ENCODE measurements at regions of chr6 and their contacts with region 1.

Region 1: GRCh38 chr6:119110601-119111548 is 32.4 kb upstream of the FAM184A start:
- DNase-seq: peak; percentile 51
- ATAC-seq: peak; percentile 86
- H3K4me3 Mint-ChIP-seq: no peak overlapping the region
- H3K27ac Mint-ChIP-seq: no peak overlapping the region
- H3K4me1 Mint-ChIP-seq: peaks cover 21% of the 10 kb centered on the region
- H3K27me3 Mint-ChIP-seq: no peaks in the 10 kb centered on the region

Region 2: DNA sequence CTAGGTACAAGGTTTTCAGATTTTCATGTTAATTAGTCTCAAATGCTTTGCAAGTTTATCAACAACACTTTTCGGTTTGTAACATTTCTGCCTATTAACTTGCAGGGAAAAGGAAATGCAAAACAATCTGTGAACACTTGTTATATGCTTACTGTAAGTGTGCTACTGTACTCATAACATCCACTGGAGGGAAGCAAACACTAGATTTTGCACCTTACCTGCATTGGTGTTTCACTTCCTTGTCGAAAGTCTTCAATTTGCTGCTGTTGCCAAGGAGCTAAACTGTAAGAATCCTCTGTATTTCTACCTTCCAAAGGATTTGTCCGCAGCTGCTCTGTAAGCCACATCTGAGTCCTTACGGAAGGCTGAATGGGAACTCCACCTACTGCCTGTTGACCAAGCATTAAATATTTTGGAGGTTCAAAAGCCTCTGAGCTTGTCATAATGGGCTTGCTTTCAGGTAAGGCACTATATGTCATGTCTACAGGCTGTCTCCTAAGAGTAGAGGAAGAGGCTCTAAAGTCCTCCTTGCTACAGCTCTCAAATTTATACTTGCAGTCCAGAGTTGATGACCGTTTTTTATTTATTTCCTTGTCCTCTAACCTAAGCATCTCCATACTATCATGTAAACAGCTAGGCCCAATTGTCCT is 545.4 kb before region 1 on chr6:
- CTCF ChIA-PET with region 1: interaction called, 3 read pairs
- POLR2A ChIA-PET with region 1: no interaction called
- intact Hi-C with region 1: loop called (anchors 10 kb)
- DNase-seq: no peak
- ATAC-seq: peak; percentile 92
- H3K4me3 Mint-ChIP-seq: no peak overlapping the region
- H3K27ac Mint-ChIP-seq: no peak overlapping the region
- H3K4me1 Mint-ChIP-seq: peaks cover 20% of the 10 kb centered on the region
- H3K27me3 Mint-ChIP-seq: no peaks in the 10 kb centered on the region

Region 3: DNA sequence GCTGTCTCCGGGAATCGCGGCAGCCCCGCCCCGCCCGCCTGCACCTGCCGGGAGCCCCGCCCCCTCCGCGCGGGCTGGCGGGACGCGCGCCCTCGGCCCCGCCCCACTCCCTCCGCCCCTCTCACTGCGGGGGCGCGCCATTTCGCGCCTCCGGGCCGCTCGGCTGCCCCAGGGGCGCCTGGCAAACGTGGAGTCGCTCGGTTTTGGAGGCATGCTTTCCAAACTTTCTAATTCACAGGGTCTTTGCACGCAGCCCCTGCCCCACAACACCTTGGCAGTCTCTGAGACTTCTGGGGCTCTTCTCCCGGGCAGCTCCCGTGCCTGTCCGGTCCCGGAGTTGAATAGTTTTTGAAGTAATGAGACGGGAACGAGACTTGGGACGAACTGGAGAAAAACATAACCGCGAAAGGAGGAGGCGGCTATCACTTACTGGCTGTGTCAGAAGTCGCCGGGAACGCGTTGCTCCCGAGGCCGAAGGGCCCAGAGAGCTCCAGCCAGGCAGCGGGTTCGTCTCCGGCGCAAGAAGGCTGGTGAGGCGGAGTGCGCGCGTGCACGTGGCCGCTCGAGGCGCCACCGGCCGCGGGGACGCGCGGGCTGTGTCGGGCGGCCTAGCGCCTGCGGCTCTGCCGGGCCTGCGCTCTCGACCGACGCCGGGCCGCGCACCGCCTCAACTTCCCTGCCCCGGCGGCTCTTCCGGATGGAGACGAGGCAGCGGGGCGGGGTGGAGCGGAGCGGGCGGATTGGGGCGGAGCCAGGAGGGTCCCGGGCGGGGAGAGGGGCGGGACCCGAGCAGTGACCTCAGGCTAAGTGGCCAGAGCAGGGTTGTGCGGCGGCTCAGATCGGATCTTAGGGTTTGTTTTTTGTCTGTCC is 176.2 kb before region 1 on chr6 and contains the start of gene MCM9:
- CTCF ChIA-PET with region 1: interaction called, 4 read pairs
- POLR2A ChIA-PET with region 1: no interaction called
- intact Hi-C with region 1: loop called in 1 of 2 experiments (anchors 1 kb)
- DNase-seq: peak; percentile 94
- ATAC-seq: peak; percentile 97
- H3K4me3 Mint-ChIP-seq: peak within 1 kb of the TSS; percentile 87
- H3K27ac Mint-ChIP-seq: peak within 1 kb of the TSS; percentile 94
- H3K4me1 Mint-ChIP-seq: peaks cover 35% of the 10 kb centered on the region
- H3K27me3 Mint-ChIP-seq: no peaks in the 10 kb centered on the region
- total RNA-seq, gene MCM9: 17.0 to 17.2 TPM

Region 4: DNA sequence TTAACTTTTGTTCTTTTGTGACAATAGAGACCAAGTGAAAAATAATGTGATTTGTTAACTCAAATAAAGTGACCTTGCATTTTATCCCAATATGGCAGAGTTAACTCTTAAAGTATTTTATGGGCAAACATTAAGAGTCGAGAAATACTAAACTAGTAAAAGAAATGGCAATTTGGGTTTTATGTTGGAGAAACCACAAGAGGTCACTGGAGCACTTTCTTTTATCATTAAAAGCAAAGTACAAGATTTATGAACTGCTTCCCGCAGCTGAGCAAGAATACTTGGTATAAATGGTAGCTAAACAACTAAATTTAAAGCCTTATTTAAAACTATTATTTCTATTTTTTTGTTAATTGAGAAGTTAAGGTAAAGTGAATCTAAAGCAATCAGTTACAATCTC is 142.5 kb before region 1 on chr6:
- CTCF ChIA-PET with region 1: interaction called, 280 read pairs
- POLR2A ChIA-PET with region 1: no interaction called
- intact Hi-C with region 1: loop called (anchors 1 kb)
- DNase-seq: no peak
- ATAC-seq: no peak
- H3K4me3 Mint-ChIP-seq: no peak overlapping the region
- H3K27ac Mint-ChIP-seq: no peak overlapping the region
- H3K4me1 Mint-ChIP-seq: no peaks in the 10 kb centered on the region
- H3K27me3 Mint-ChIP-seq: no peaks in the 10 kb centered on the region

Region 5: GRCh38 chr6:119078376-119079282 is 32.2 kb before region 1 on chr6 and contains the start of gene FAM184A:
- CTCF ChIA-PET with region 1: interaction called, 16 read pairs
- POLR2A ChIA-PET with region 1: interaction called, 6 read pairs
- intact Hi-C with region 1: loop called (anchors 1 to 2 kb)
- DNase-seq: peak; percentile 82
- ATAC-seq: peak; percentile 37
- H3K4me3 Mint-ChIP-seq: peak within 1 kb of the TSS; percentile 77
- H3K27ac Mint-ChIP-seq: peak within 1 kb of the TSS; percentile 94
- H3K4me1 Mint-ChIP-seq: peaks cover 46% of the 10 kb centered on the region
- H3K27me3 Mint-ChIP-seq: no peaks in the 10 kb centered on the region
- total RNA-seq, gene FAM184A: 13.8 to 14.5 TPM

Region 6: GRCh38 chr6:119129148-119129967 is 18.5 kb after region 1 on chr6:
- CTCF ChIA-PET with region 1: interaction called, 11 read pairs
- POLR2A ChIA-PET with region 1: no interaction called
- intact Hi-C with region 1: no loop called
- DNase-seq: no peak
- ATAC-seq: peak; percentile 86
- H3K4me3 Mint-ChIP-seq: no peak overlapping the region
- H3K27ac Mint-ChIP-seq: no peak overlapping the region
- H3K4me1 Mint-ChIP-seq: peaks cover 6% of the 10 kb centered on the region
- H3K27me3 Mint-ChIP-seq: no peaks in the 10 kb centered on the region

Region 7: GRCh38 chr6:119209452-119210205 is 98.8 kb after region 1 on chr6:
- CTCF ChIA-PET with region 1: no interaction called
- POLR2A ChIA-PET with region 1: no interaction called
- intact Hi-C with region 1: no loop called
- DNase-seq: no peak
- ATAC-seq: no peak
- H3K4me3 Mint-ChIP-seq: no peak overlapping the region
- H3K27ac Mint-ChIP-seq: no peak overlapping the region
- H3K4me1 Mint-ChIP-seq: peaks cover 13% of the 10 kb centered on the region
- H3K27me3 Mint-ChIP-seq: no peaks in the 10 kb centered on the region

Measured in activated CD4-positive, alpha-beta T cell treated with anti-CD3 and anti-CD28 coated beads for 36 hours (primary cell).